GM12878 (cell line): ENCODE measurements at regions of chrX and their contacts with region 1.

Region 1: GRCh38 chrX:150772150-150772970 is 79.2 kb downstream of the MTMR1 start:
- DNase-seq: no peak
- ATAC-seq: peak; percentile 98
- H3K4me3 ChIP-seq: no peak overlapping the region
- H3K27ac ChIP-seq: no peak overlapping the region
- H3K4me1 ChIP-seq: no peaks in the 10 kb centered on the region
- H3K27me3 ChIP-seq: no peaks in the 10 kb centered on the region
- CTCF ChIP-seq: peak; percentile 76 to 91 (median 86)
- EP300 ChIP-seq: no peak
- POLR2A ChIP-seq: no peak
- RAD21 ChIP-seq: peak; percentile 98

Region 2: GRCh38 chrX:150575416-150575808 is 196.9 kb before region 1 on chrX:
- CTCF ChIA-PET with region 1: no interaction called
- POLR2A ChIA-PET with region 1: no interaction called
- RAD21 ChIA-PET with region 1: no interaction called
- SMC1A ChIA-PET with region 1: no interaction called
- in situ Hi-C with region 1: no loop called
- intact Hi-C with region 1: no loop called
- DNase-seq: no peak
- ATAC-seq: peak; percentile 35
- H3K4me3 ChIP-seq: peak overlapping the region; percentile 34; the same call in 1 of the 2 replicates
- H3K27ac ChIP-seq: peak overlapping the region; percentile 34
- H3K4me1 ChIP-seq: peaks cover 14% of the 10 kb centered on the region; the same call in 1 of the 2 replicates
- H3K27me3 ChIP-seq: no peaks in the 10 kb centered on the region
- CTCF ChIP-seq: no peak
- EP300 ChIP-seq: no peak
- POLR2A ChIP-seq: no peak
- RAD21 ChIP-seq: no peak

Region 3: GRCh38 chrX:150693775-150694574 is 78.4 kb before region 1 on chrX:
- CTCF ChIA-PET with region 1: no interaction called
- POLR2A ChIA-PET with region 1: no interaction called
- RAD21 ChIA-PET with region 1: no interaction called
- SMC1A ChIA-PET with region 1: no interaction called
- in situ Hi-C with region 1: no loop called
- intact Hi-C with region 1: no loop called
- DNase-seq: no peak
- ATAC-seq: peak; percentile 74
- H3K4me3 ChIP-seq: peak overlapping the region; percentile 62
- H3K27ac ChIP-seq: peak overlapping the region; percentile 90
- H3K4me1 ChIP-seq: peaks cover 13% of the 10 kb centered on the region
- H3K27me3 ChIP-seq: no peaks in the 10 kb centered on the region
- CTCF ChIP-seq: no peak
- EP300 ChIP-seq: no peak
- POLR2A ChIP-seq: no peak
- RAD21 ChIP-seq: no peak

Region 4: GRCh38 chrX:150805736-150806135 is 33.4 kb after region 1 on chrX:
- CTCF ChIA-PET with region 1: no interaction called
- POLR2A ChIA-PET with region 1: no interaction called
- RAD21 ChIA-PET with region 1: no interaction called
- SMC1A ChIA-PET with region 1: no interaction called
- in situ Hi-C with region 1: no loop called
- intact Hi-C with region 1: no loop called
- DNase-seq: no peak
- ATAC-seq: no peak
- H3K4me3 ChIP-seq: no peak overlapping the region
- H3K27ac ChIP-seq: no peak overlapping the region
- H3K4me1 ChIP-seq: no peaks in the 10 kb centered on the region
- H3K27me3 ChIP-seq: no peaks in the 10 kb centered on the region
- CTCF ChIP-seq: no peak
- EP300 ChIP-seq: no peak
- POLR2A ChIP-seq: no peak
- RAD21 ChIP-seq: no peak

Region 5: DNA sequence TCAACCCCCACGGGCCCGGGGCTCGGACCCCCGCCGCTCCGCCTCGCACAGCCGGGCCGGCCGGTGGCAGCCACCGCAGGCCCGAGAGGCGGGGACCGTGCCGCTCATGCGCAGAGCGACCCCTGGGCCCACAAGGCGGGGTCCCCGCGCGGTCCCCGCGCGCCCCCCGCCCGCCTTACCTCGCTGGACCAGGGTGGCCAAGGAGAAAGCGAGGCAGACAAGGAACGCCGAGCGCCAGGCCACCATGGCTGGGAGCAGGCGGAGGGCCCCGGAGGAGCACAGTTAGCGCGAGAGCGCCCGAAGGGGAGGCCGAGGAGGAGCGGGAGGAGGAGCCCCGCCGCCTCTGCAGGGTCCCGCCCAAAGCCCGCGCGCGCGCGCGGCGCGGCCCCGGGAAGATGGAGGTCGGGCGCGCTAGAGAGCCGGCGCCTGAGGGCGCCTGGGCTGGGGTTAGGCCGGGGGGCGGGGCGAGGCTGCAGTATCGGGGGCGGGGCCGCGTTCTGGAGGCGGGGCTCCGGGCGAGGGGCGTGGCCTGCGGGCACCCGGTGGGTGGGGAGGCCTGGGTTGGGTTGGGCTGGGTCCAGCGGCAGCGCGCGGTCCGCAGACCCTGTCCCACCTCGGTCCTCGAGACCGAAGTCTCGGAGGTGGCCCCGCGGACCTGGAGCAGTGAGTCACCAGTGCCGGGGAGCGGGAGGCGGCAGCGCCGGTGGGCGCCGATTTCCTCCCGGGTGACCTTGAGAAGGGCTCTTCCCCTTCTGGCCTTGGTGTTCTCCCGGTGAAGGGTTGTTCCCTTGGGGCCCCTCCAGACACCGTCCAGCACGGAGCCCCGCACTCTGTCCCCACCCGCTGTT is 126.2 kb after region 1 on chrX and contains the start of gene CD99L2:
- CTCF ChIA-PET with region 1: no interaction called
- POLR2A ChIA-PET with region 1: no interaction called
- RAD21 ChIA-PET with region 1: no interaction called
- SMC1A ChIA-PET with region 1: no interaction called
- in situ Hi-C with region 1: no loop called
- intact Hi-C with region 1: loop called (anchors 5 kb)
- DNase-seq: no peak
- ATAC-seq: peak; percentile 96
- H3K4me3 ChIP-seq: peak within 1 kb of the TSS; percentile 71
- H3K27ac ChIP-seq: peak within 1 kb of the TSS; percentile 69
- H3K4me1 ChIP-seq: no peaks in the 10 kb centered on the region; the same call in 1 of the 2 replicates
- H3K27me3 ChIP-seq: no peaks in the 10 kb centered on the region
- CTCF ChIP-seq: no peak
- EP300 ChIP-seq: no peak
- POLR2A ChIP-seq: peak; percentile 84
- RAD21 ChIP-seq: no peak
- polyA plus RNA-seq, gene CD99L2: 1.1 to 2.3 TPM

Region 6: GRCh38 chrX:151004082-151004481 is 231.7 kb after region 1 on chrX:
- CTCF ChIA-PET with region 1: interaction called, 5 read pairs
- POLR2A ChIA-PET with region 1: no interaction called
- RAD21 ChIA-PET with region 1: no interaction called
- SMC1A ChIA-PET with region 1: no interaction called
- in situ Hi-C with region 1: loop called (anchors 5 kb)
- intact Hi-C with region 1: loop called (anchors 2 kb)
- DNase-seq: no peak
- ATAC-seq: 0 out of 3 replicates have a peak, but pooled peaks have one; percentile 31
- H3K4me3 ChIP-seq: no peak overlapping the region
- H3K27ac ChIP-seq: no peak overlapping the region
- H3K4me1 ChIP-seq: no peaks in the 10 kb centered on the region
- H3K27me3 ChIP-seq: no peaks in the 10 kb centered on the region
- CTCF ChIP-seq: peak in 1 of 3 experiments; percentile 21; a peak in 1 of 6 replicates
- EP300 ChIP-seq: no peak
- POLR2A ChIP-seq: no peak
- RAD21 ChIP-seq: peak; percentile 47

Region 7: GRCh38 chrX:151359931-151360871 is 587.8 kb after region 1 on chrX:
- CTCF ChIA-PET with region 1: no interaction called
- POLR2A ChIA-PET with region 1: no interaction called
- RAD21 ChIA-PET with region 1: no interaction called
- SMC1A ChIA-PET with region 1: no interaction called
- in situ Hi-C with region 1: no loop called
- intact Hi-C with region 1: loop called (anchors 1 kb)
- DNase-seq: no peak
- ATAC-seq: peak; percentile 97
- H3K4me3 ChIP-seq: no peak overlapping the region
- H3K27ac ChIP-seq: no peak overlapping the region
- H3K4me1 ChIP-seq: no peaks in the 10 kb centered on the region
- H3K27me3 ChIP-seq: no peaks in the 10 kb centered on the region
- CTCF ChIP-seq: peak; percentile 59 to 80 (median 73)
- EP300 ChIP-seq: no peak
- POLR2A ChIP-seq: no peak
- RAD21 ChIP-seq: peak; percentile 51

Region 8: GRCh38 chrX:151680805-151681204 is 908.4 kb after region 1 on chrX:
- CTCF ChIA-PET with region 1: interaction called, 3 read pairs
- POLR2A ChIA-PET with region 1: no interaction called
- RAD21 ChIA-PET with region 1: no interaction called
- SMC1A ChIA-PET with region 1: no interaction called
- in situ Hi-C with region 1: loop called (anchors 25 kb)
- intact Hi-C with region 1: loop called (anchors 5 kb)
- DNase-seq: peak; percentile 12
- ATAC-seq: peak; percentile 99
- H3K4me3 ChIP-seq: no peak overlapping the region
- H3K27ac ChIP-seq: no peak overlapping the region
- H3K4me1 ChIP-seq: no peaks in the 10 kb centered on the region
- H3K27me3 ChIP-seq: 0 out of 4 replicates have a peak, but pooled peaks cover 0 to 2% of the 10 kb centered on the region in 2 experiments
- CTCF ChIP-seq: peak; percentile 73 to 83 (median 80)
- EP300 ChIP-seq: no peak
- POLR2A ChIP-seq: no peak
- RAD21 ChIP-seq: peak; percentile 92